ENCODE measurements at regions of chr16 and their contacts with region 1.

Region 1: GRCh38 chr16:3129137-3130131 is 5.4 kb upstream of the ZNF213 start:
- DNase-seq: peak; percentile 82
- H3K4me3 Mint-ChIP-seq: peak overlapping the region; percentile 88
- H3K27ac Mint-ChIP-seq: peak overlapping the region; percentile 88
- H3K4me1 Mint-ChIP-seq: peaks cover 31% of the 10 kb centered on the region
- H3K27me3 Mint-ChIP-seq: no peaks in the 10 kb centered on the region

Region 2: GRCh38 chr16:2926650-2927646 is 202.5 kb before region 1 on chr16:
- CTCF ChIA-PET with region 1: no interaction called
- POLR2A ChIA-PET with region 1: no interaction called
- intact Hi-C with region 1: no loop called
- DNase-seq: peak; percentile 92
- H3K4me3 Mint-ChIP-seq: no peak overlapping the region
- H3K27ac Mint-ChIP-seq: no peak overlapping the region
- H3K4me1 Mint-ChIP-seq: peaks cover 12% of the 10 kb centered on the region
- H3K27me3 Mint-ChIP-seq: no peaks in the 10 kb centered on the region

Region 3: DNA sequence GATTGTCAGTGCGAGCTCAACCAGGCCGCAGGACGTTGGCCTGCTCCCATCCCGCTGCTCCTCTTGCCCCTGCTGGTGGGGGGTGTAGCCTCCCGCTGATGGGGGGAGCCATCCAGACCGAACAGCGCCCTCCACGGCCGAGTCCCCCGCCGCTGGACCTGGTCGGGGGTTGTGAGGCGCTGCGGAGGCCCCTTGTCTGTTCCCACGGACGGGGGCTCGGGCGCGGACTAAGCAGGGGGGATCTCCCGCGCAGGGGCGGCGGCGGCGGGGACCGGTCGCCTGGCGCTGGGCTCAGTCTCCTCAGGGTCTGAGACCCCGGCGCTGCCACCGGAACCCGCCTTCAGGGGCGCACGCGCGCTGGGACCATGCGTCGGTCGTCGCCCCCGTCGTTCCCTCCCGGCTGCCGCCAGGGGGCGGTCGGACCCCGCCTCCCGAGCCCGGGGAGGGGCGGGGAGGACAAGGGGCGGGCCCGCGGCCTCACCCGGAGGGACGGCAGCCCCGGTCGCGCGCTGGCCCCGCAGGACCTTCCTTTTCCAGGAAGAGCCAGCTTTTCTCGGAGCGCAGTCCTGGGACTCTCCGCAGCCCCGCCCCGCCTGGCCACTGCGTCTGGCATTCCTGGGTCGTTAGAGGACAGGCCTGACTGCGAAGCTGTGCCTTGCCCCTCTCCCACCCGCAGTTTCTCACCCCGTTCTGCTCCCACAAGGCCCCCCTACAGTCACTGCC is 70.3 kb before region 1 on chr16:
- CTCF ChIA-PET with region 1: interaction called, 270 read pairs
- POLR2A ChIA-PET with region 1: interaction called, 17 read pairs
- intact Hi-C with region 1: loop called (anchors 1 kb)
- DNase-seq: peak; percentile 92
- H3K4me3 Mint-ChIP-seq: peak overlapping the region; percentile 91
- H3K27ac Mint-ChIP-seq: peak overlapping the region; percentile 95
- H3K4me1 Mint-ChIP-seq: peaks cover 68% of the 10 kb centered on the region
- H3K27me3 Mint-ChIP-seq: no peaks in the 10 kb centered on the region

Region 4: GRCh38 chr16:3094289-3095027 is 35.0 kb before region 1 on chr16:
- CTCF ChIA-PET with region 1: interaction called, 266 read pairs
- POLR2A ChIA-PET with region 1: interaction called, 5 read pairs
- intact Hi-C with region 1: loop called (anchors 1 kb)
- DNase-seq: peak; percentile 75
- H3K4me3 Mint-ChIP-seq: peak overlapping the region; percentile 25
- H3K27ac Mint-ChIP-seq: peak overlapping the region; percentile 90
- H3K4me1 Mint-ChIP-seq: peaks cover 27% of the 10 kb centered on the region
- H3K27me3 Mint-ChIP-seq: no peaks in the 10 kb centered on the region

Region 5: GRCh38 chr16:3140603-3141427 is 11.4 kb after region 1 on chr16:
- CTCF ChIA-PET with region 1: interaction called, 80 read pairs
- POLR2A ChIA-PET with region 1: interaction called, 3 read pairs
- intact Hi-C with region 1: no loop called
- DNase-seq: no peak
- H3K4me3 Mint-ChIP-seq: no peak overlapping the region
- H3K27ac Mint-ChIP-seq: no peak overlapping the region
- H3K4me1 Mint-ChIP-seq: peaks cover 9% of the 10 kb centered on the region
- H3K27me3 Mint-ChIP-seq: no peaks in the 10 kb centered on the region

Region 6: DNA sequence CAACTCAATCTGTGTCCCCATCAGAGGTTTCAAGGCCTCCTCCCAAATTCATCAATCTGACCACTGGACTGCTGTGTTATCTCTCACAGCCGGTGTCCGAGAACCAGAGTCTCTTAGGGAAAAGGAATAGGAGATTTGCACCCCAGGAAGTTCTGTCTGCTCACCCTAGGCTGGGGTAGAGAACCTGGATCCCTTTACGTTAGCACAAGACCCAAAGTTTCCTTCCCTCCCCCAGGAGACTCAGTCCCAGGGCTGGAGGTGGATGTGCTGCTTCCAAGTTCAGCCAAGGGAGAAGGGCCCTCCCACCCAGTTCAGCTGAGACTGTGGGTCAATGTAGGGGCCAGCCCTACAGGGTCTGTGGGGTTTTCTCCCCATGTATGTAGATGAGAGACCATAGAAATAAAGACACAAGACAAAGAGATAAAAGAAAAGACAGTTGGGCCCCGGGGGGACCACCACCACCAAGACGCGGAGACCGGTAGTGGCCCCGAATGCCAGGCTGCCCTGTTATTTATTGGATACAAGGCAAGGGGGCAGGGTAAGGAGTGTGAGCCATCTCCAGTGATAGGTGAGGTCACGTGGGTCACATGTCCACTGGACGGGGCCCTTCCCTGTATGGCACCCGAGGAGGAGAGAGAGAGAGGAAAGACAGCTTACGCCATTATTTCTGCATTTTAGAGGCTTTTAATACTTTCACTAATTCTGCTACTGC is 35.8 kb after region 1 on chr16:
- CTCF ChIA-PET with region 1: interaction called, 25 read pairs
- POLR2A ChIA-PET with region 1: interaction called, 8 read pairs
- intact Hi-C with region 1: loop called (anchors 1 kb)
- DNase-seq: no peak
- H3K4me3 Mint-ChIP-seq: no peak overlapping the region
- H3K27ac Mint-ChIP-seq: peak overlapping the region; percentile 18
- H3K4me1 Mint-ChIP-seq: peaks cover 13% of the 10 kb centered on the region
- H3K27me3 Mint-ChIP-seq: no peaks in the 10 kb centered on the region